Dorsolateral prefrontal cortex (tissue), 120 donors: ENCODE measurements at regions of chr12 and their contacts with region 1.

Region 1: GRCh38 chr12:80053048-80053790 is 46.1 kb upstream of the OTOGL start:
- DNase-seq: peak; percentile 14 to 84 (median 64)
- H3K4me3 ChIP-seq: no peak overlapping the region
- H3K27ac ChIP-seq: peak overlapping the region in 52 of 59 donors; percentile 11 to 91 (median 74)
- H3K27me3 ChIP-seq: no peaks in the 10 kb centered on the region
- CTCF ChIP-seq: no peak

Region 2: DNA sequence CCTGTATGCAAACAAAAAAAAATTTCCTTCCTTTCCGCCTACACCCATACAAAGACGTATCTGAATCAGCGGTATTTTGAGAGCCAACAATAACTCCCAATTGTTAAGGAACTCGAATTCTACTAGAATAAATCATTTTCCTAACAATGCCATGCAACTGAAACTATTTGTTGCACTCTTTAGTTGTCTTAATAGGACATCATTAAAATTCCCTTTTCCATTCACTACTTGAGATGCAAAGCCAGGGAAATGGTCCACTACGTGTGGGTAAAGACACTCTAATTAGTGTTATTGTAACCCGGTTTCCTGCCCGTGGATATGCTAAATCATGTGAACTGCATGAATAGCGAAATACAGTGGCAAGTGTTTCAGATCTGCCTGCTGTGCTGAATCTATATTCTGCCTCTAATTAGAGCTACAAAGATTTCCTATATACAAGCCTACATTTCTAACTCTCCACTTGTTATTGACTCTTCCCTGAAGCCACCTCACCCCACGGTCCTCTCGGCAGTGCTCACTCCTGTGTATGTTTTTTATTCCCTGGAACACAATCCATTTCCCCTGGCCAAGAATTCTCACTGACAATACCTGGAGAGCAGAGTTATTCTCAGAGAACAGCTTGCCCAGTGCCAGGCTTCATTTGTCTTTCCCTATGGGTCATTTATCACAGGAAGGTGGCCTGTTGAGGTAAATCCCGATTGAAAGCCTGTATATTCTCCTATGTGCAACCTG is 530.8 kb before region 1 on chr12:
- intact Hi-C with region 1: no loop called
- DNase-seq: peak in 1 of 10 donors; percentile 59
- H3K4me3 ChIP-seq: peak overlapping the region in 19 of 59 donors; percentile 1 to 36 (median 17)
- H3K27ac ChIP-seq: no peak overlapping the region
- H3K27me3 ChIP-seq: no peaks in the 10 kb centered on the region
- CTCF ChIP-seq: no peak

Region 3: DNA sequence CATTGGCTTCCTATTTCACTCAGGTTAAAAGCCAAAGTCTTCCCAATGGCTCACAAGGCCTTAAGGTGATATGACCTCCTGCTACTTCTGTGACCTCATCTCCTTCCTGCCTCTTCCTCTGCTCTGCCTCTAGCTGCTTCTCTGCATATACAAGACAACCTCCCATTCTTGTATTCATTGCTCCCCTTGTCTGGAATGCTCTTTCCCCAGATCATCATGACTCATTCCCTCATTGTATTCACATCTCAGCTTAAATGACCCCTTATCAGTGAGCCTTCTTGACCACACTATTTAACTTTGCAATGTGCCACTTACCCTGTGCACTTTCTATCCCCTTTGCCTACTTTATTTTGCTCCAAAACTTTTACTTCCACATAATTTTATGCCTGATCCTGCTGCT is 208.5 kb before region 1 on chr12:
- intact Hi-C with region 1: loop called in 1 of 2 experiments (anchors 5 kb)
- DNase-seq: no peak
- H3K4me3 ChIP-seq: no peak overlapping the region
- H3K27ac ChIP-seq: peak overlapping the region in 13 of 59 donors; percentile 1 to 63 (median 42)
- H3K27me3 ChIP-seq: no peaks in the 10 kb centered on the region
- CTCF ChIP-seq: no peak

Region 4: GRCh38 chr12:79997096-79997791 is 56.0 kb before region 1 on chr12:
- intact Hi-C with region 1: no loop called
- DNase-seq: no peak
- H3K4me3 ChIP-seq: no peak overlapping the region
- H3K27ac ChIP-seq: no peak overlapping the region
- H3K27me3 ChIP-seq: no peaks in the 10 kb centered on the region
- CTCF ChIP-seq: no peak

Region 5: GRCh38 chr12:80162177-80162576 is 109.0 kb after region 1 on chr12:
- intact Hi-C with region 1: loop called in 1 of 2 experiments (anchors 10 kb)
- DNase-seq: no peak
- H3K4me3 ChIP-seq: no peak overlapping the region
- H3K27ac ChIP-seq: peak overlapping the region in 5 of 59 donors; percentile 0 to 44 (median 7)
- H3K27me3 ChIP-seq: no peaks in the 10 kb centered on the region
- CTCF ChIP-seq: no peak

Region 6: GRCh38 chr12:80241576-80242273 is 188.5 kb after region 1 on chr12:
- intact Hi-C with region 1: no loop called
- DNase-seq: no peak
- H3K4me3 ChIP-seq: no peak overlapping the region
- H3K27ac ChIP-seq: no peak overlapping the region
- H3K27me3 ChIP-seq: no peaks in the 10 kb centered on the region
- CTCF ChIP-seq: no peak